HepG2 (cell line): ENCODE measurements at regions of chr1 and their contacts with region 1.

Region 1: DNA sequence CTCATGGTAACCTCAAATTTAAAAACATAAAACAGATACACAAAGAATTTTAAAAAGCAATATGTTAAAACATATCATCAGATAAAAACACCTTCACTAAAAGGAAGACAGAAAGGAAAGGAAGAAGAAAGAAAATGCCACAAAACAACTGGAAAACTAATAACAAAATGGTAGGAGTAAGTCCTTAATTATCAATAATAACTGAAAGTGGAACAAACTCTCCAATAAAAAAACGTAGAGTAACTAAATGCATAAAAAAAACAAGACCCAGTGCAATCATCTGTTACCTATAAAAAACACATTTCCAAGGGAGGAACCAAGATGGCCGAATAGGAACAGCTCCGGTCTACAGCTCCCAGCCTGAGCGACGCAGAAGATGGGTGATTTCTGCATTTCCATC is 47.1 kb upstream of the ACADM start:
- DNase-seq: no peak
- ATAC-seq: 0 out of 3 replicates have a peak, but pooled peaks have one; percentile 29
- H3K4me3 ChIP-seq: peak overlapping the region; percentile 60 to 88 (median 71)
- H3K27ac ChIP-seq: peak overlapping the region; percentile 67
- H3K4me1 ChIP-seq: peaks cover 29% of the 10 kb centered on the region
- H3K27me3 ChIP-seq: no peaks in the 10 kb centered on the region
- CTCF ChIP-seq: no peak
- EP300 ChIP-seq: no peak
- POLR2A ChIP-seq: no peak
- RAD21 ChIP-seq: no peak

Region 2: DNA sequence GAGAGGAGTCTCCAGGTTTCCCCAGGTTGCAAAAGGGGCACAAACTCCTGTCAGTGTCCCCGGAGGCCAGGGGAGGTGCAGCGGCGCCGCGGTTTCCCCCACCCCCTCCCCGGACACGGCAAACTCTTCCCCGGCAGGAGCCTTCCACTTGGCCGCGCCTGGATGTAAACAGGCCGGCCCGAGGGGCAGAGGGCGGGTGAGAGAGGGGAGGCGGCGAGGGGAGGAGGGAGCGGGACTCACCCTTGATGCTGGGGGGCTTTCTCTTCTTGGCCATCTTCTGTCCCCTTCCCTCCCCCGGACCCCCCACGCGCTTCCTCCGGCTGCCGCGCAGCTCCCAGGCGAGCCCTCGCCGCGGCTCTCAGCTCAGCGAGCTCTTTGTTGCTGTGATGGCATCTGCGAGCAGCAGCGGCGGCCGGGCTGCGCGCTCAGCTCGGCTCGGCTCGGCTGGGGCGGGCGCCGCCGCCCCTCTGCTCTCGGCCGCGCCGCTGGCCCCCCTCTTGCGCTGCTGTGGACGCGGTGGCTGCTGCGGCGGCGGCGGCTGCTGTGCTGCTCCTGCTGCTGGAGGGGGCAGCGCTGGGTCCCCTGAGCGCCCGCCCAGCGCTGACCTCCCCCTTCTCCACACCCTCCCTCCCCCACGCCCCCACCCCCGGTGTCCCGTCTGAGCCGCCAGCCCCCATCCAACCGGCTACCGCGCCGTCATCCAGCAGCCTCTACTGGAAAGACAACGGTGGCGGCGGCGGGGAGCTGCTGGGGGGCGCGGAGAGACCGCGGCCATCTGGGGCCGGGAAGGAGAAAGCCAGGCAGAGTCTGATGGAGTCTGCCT is 61.6 kb before region 1 on chr1:
- CTCF ChIA-PET with region 1: no interaction called
- POLR2A ChIA-PET with region 1: interaction called, 4 read pairs
- in situ Hi-C with region 1: no loop called
- intact Hi-C with region 1: loop called (anchors 1 kb)
- DNase-seq: no peak
- ATAC-seq: peak; percentile 82
- H3K4me3 ChIP-seq: peak overlapping the region; percentile 69 to 81 (median 78)
- H3K27ac ChIP-seq: no peak overlapping the region
- H3K4me1 ChIP-seq: peaks cover 13% of the 10 kb centered on the region
- H3K27me3 ChIP-seq: peaks cover 0 to 2% of the 10 kb centered on the region in 2 experiments; a peak in 1 of 5 replicates
- CTCF ChIP-seq: no peak
- EP300 ChIP-seq: no peak
- POLR2A ChIP-seq: no peak
- RAD21 ChIP-seq: no peak

Region 3: GRCh38 chr1:75724472-75725022 is 47.1 kb after region 1 on chr1 and contains the start of gene ACADM:
- CTCF ChIA-PET with region 1: no interaction called
- POLR2A ChIA-PET with region 1: interaction called, 9 read pairs
- in situ Hi-C with region 1: no loop called
- intact Hi-C with region 1: loop called (anchors 1 kb)
- DNase-seq: peak; percentile 88
- ATAC-seq: peak; percentile 94
- H3K4me3 ChIP-seq: peak within 1 kb of the TSS; percentile 86 to 98 (median 95)
- H3K27ac ChIP-seq: peak within 1 kb of the TSS; percentile 91
- H3K4me1 ChIP-seq: peaks cover 42% of the 10 kb centered on the region
- H3K27me3 ChIP-seq: no peaks in the 10 kb centered on the region
- CTCF ChIP-seq: 0 out of 2 replicates have a peak, but pooled peaks have one; percentile 13
- EP300 ChIP-seq: no peak; a peak in 2 of 4 replicates
- POLR2A ChIP-seq: peak; percentile 79 to 96
- RAD21 ChIP-seq: no peak
- total RNA-seq, gene ACADM: 92.2 and 133 TPM in 2 replicates